Activated T-helper 1 cell treated with anti-CD3 and anti-CD28 coated beads, Interleukin-12 subunit alpha, Interleukin-12 subunit beta, Interleukin-2, Interleukin-4 antibody, amounts not matched to agents 30 ng/mL and 10 ng/mL and 1 ng/mL, durations not matched to agents 14 hours and 24 hours and 36 hours (primary cell): ENCODE measurements at regions of chr15 and their contacts with region 1.

Region 1: DNA sequence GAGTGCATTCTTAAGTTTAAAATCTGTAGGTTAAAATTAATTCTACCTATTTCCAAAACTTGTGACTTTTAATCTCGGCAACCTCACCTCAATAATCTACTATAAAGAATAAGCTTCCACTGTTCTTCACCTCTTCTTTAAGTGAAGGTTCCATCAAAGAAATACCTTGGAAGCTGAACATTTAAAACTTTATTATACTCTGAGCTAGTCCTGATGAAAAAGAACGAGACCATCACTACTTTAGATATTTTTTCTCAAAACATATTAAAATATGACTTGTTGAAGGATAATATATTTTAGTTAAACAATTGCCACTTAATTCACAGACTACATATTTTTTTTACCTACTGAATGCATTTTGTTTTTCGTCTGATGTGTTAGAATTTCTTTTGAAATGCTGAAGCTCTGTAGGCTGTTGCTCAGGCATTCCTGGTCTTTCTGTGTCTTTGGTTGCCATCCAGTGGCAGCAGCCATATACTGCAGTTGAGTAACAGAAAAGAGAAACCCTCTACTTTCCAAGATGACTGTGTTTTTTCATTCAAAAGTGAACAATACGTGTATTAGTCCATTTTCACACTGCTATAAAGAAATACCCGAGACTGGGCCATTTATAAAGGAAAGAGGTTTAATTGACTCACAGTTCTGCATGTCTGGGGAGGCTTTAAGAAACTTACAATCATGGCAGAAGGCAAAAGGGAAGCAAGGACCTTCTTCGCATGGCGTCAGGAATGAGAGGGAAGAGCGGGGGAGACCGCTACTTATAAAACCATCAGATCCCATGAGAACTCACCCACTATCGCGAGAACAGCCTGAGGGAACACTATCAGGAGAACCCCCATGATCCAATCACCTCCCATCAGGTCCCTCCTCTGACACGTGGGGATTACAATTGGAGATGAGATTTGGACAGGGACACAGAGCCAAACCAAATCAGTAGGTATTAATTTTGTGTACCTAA is 4.5 kb upstream of the GOLGA8B start:
- DNase-seq: peak; percentile 48
- H3K4me3 Mint-ChIP-seq: peak overlapping the region; percentile 83
- H3K27ac Mint-ChIP-seq: peak overlapping the region; percentile 52
- H3K4me1 Mint-ChIP-seq: peaks cover 19% of the 10 kb centered on the region
- H3K27me3 Mint-ChIP-seq: peaks cover 30% of the 10 kb centered on the region

Region 2: DNA sequence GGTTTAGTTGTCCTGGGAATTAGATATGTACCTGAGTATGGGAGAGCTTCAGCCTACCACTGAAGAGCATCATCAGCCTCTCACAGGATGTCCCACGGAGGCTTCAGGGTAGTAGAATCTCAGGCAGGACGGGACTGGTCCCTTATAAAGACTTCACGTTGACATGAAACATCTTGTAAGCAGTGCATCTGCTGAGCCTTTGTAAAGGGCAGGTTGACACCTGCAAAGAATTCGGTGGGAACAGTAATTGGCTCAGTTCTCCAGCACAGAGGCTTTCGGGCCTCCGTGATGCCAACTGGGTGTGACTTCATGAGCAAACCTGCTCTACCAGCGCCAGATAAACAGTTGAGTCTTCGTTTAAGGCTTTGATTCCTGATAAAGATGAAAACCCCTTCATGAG is 522.1 kb before region 1 on chr15:
- intact Hi-C with region 1: loop called (anchors 10 kb)
- DNase-seq: no peak
- H3K4me3 Mint-ChIP-seq: no peak overlapping the region
- H3K27ac Mint-ChIP-seq: no peak overlapping the region
- H3K4me1 Mint-ChIP-seq: no peaks in the 10 kb centered on the region
- H3K27me3 Mint-ChIP-seq: no peaks in the 10 kb centered on the region

Region 3: DNA sequence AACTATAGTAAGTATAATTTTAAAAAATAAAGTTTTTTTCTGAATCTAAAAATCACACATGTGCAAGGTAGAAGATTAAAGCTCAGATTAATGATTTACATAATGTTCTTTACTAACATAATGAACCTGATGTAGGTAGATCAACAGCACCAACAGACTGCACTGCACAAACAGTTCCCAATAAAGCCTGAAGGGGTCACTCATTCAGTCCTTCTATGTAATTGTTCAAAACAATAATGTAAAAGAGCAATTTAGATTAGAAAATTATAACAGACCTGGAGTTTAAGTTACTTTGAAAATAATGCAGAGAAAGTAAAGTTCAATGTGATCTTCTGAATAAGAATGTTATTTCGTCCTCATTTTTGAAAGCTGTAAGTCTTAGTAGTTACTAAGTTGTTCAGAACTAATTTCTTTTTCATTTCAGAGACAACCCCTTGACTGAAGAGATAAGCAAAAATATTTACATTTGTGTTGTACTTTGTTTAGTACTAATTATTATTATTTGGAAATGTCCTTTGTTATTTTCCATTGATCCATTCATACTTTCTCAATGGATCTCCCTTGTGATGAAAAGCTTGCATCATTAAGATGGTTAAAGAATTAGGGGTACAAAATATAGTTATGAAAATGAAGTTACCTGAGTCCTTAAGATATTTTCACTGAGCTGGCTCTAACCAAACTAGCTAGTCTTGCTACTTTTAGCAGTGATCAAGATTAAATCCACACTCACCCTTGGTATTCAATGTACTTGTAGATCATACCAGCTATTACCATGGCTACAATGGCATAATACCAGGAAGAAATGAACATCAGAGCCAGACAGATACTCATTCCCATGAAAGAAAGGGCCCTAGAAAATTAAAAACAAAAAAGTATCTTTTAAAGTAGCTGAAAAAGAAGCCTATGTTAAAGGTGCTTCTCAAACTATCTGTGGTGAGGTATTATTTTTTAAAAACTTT is 346.3 kb before region 1 on chr15:
- intact Hi-C with region 1: loop called (anchors 5 kb)
- DNase-seq: no peak
- H3K4me3 Mint-ChIP-seq: no peak overlapping the region
- H3K27ac Mint-ChIP-seq: no peak overlapping the region
- H3K4me1 Mint-ChIP-seq: peaks cover 38% of the 10 kb centered on the region
- H3K27me3 Mint-ChIP-seq: no peaks in the 10 kb centered on the region

Region 4: GRCh38 chr15:34337557-34338306 is 250.3 kb before region 1 on chr15 and contains the start of gene SLC12A6:
- intact Hi-C with region 1: loop called (anchors 2 kb)
- DNase-seq: peak; percentile 90
- H3K4me3 Mint-ChIP-seq: peak within 1 kb of the TSS; percentile 97
- H3K27ac Mint-ChIP-seq: peak within 1 kb of the TSS; percentile 97
- H3K4me1 Mint-ChIP-seq: peaks cover 66% of the 10 kb centered on the region
- H3K27me3 Mint-ChIP-seq: no peaks in the 10 kb centered on the region
- total RNA-seq, gene SLC12A6: 33.2 and 36.4 TPM in 2 replicates

Region 5: DNA sequence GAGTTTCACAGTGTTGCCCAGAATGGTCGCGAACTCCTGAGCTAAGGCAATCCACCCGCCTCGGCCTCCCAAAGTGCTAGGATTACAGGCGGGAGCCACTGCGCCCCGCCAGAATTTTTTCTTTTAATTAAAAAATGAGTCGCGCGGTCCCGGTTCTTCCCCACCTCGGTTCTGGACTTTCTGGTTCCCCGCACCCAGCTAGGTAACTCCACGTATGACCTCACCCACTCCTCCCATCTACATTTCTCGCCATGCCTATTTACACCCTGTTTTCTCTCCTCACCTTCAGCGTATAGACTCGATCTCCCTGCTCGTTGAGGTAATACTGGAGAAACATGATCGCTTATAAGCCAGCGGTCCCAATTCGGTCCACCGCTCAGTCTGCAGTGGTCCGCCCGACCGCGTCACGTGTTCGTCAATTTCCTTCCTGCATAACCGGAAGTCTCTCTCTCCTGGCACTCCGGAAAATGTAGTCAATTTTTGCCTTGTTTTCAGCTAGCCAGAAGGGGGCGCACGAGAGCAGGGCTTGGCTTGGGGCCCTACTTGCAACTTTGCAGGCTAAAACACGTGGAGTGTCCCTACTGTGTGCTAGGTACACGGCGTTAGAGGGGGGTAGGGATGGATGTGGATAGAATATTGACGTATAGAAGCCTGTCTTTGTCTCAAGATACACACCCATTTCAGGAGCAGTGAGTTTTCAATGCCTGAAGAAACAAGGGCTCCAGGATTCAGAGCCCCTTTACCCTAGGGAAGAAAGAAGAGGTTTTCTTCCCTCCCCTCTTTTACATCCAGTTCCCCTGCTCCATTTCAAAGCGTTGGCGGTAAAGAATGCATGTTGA is 245.0 kb before region 1 on chr15 and contains the starts of genes NOP10 and NUTM1:
- intact Hi-C with region 1: loop called (anchors 1 kb)
- DNase-seq: peak; percentile 91
- H3K4me3 Mint-ChIP-seq: no peak within 1 kb of the TSS
- H3K27ac Mint-ChIP-seq: peak within 1 kb of the TSS; percentile 88
- H3K4me1 Mint-ChIP-seq: peaks cover 26% of the 10 kb centered on the region
- H3K27me3 Mint-ChIP-seq: no peaks in the 10 kb centered on the region
- total RNA-seq, gene NOP10: 257 and 267 TPM in 2 replicates
- total RNA-seq, gene NUTM1: not detected in 2 replicates

Region 6: GRCh38 chr15:34437687-34438086 is 150.3 kb before region 1 on chr15 and contains the start of gene GOLGA8A:
- intact Hi-C with region 1: loop called (anchors 1 kb)
- DNase-seq: peak; percentile 80
- H3K4me3 Mint-ChIP-seq: peak within 1 kb of the TSS; percentile 91
- H3K27ac Mint-ChIP-seq: peak within 1 kb of the TSS; percentile 98
- H3K4me1 Mint-ChIP-seq: peaks cover 29% of the 10 kb centered on the region
- H3K27me3 Mint-ChIP-seq: peaks cover 14% of the 10 kb centered on the region
- total RNA-seq, gene GOLGA8A: 264 and 275 TPM in 2 replicates

Region 7: GRCh38 chr15:34514251-34514670 is 73.7 kb before region 1 on chr15:
- intact Hi-C with region 1: loop called (anchors 2 kb)
- DNase-seq: no peak
- H3K4me3 Mint-ChIP-seq: peak overlapping the region; percentile 78
- H3K27ac Mint-ChIP-seq: no peak overlapping the region
- H3K4me1 Mint-ChIP-seq: peaks cover 17% of the 10 kb centered on the region
- H3K27me3 Mint-ChIP-seq: peaks cover 70% of the 10 kb centered on the region